ENCODE measurements at regions of chr2 and their contacts with region 1.

Region 1: DNA sequence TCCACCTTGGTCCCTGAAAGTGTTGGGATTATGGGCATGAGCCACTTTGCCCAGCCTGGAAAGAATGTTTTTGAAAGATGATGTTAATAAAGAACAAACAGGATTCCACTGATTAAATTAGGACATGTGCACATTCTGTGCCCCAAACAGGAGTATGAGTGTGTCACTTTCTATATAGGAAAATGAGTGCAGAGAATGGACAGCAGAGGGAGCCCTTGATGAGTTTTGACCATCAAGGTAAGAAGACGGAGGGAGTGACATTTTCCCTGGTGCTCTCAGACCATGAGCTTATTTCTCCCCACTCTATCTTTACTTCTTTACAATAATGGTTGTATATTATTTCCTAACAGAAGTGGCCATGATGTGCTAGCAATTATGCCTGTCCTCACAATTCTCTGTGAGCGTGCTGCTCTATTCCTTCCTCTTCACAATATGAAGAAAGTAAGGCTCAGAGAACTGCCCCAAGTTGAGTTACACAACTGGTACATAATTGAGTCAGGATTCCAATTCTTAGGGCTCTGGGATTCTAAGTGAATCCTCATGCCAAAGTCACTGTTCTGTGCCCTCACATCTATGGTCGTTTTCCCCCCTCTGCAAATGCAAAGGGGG is 20.6 kb downstream of the RPL37A start:
- DNase-seq: peak; percentile 65
- CTCF ChIP-seq: peak; percentile 60

Region 2: DNA sequence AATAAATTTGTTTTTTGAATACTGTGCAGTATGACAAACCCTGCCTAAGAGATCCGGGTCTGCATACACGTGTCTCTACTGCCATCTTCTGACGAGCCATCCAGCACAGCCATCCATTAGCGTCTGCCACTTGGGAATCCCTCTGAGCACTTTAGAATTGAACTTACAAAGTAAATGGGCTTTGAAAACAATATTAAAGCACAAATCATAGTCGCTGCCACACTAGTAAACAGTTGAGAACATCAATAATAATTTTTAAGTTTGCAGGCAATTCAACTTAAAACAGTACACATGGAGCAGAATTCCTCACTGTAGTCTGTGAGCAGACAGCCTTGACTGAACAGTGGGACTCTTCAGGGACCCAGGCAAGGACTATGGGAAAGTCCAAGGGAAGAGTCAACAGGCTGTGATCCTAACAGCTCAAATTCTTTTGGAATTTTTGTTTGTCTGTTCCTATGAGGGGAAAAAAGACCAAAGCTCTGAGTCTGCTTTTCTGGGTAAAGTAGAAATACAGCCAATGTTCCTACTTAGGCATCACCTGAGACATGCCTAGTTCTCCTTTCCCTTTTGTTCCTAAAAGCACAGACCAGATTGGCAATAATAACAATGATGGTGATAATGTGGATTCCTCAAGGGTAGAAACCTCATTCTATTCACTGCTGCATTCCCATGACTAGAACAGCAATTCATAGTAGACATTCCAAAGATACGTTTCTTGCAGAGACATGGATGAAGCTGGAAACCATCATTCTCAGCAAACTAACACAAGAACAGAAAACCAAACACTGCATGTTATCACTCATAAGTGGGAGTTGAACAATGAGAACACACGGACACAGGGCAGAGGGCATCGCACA is 598.8 kb before region 1 on chr2:
- CTCF ChIA-PET with region 1: no interaction called
- POLR2A ChIA-PET with region 1: no interaction called
- DNase-seq: peak; percentile 60
- CTCF ChIP-seq: peak; percentile 75

Region 3: DNA sequence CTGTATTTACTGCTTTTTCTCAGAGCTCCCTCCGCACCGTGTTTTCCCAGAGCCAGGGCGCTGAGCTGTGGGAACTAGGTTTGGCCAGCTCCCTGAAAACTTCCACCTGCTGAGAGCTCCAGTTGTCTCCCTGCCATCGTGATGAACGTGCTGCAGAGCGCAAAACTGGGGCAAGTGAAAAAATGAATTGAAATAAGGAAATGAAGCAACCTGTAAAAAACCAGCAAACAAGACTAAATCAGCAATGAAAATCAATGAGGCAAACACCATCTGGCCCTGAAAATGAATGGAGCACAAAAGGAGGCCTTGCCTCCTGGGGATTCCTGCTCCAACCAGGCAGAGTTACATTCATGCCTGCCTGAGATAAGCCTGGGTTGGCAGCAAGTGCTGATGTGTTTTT is 276.9 kb before region 1 on chr2:
- CTCF ChIA-PET with region 1: no interaction called
- POLR2A ChIA-PET with region 1: no interaction called
- DNase-seq: no peak
- CTCF ChIP-seq: no peak

Region 4: DNA sequence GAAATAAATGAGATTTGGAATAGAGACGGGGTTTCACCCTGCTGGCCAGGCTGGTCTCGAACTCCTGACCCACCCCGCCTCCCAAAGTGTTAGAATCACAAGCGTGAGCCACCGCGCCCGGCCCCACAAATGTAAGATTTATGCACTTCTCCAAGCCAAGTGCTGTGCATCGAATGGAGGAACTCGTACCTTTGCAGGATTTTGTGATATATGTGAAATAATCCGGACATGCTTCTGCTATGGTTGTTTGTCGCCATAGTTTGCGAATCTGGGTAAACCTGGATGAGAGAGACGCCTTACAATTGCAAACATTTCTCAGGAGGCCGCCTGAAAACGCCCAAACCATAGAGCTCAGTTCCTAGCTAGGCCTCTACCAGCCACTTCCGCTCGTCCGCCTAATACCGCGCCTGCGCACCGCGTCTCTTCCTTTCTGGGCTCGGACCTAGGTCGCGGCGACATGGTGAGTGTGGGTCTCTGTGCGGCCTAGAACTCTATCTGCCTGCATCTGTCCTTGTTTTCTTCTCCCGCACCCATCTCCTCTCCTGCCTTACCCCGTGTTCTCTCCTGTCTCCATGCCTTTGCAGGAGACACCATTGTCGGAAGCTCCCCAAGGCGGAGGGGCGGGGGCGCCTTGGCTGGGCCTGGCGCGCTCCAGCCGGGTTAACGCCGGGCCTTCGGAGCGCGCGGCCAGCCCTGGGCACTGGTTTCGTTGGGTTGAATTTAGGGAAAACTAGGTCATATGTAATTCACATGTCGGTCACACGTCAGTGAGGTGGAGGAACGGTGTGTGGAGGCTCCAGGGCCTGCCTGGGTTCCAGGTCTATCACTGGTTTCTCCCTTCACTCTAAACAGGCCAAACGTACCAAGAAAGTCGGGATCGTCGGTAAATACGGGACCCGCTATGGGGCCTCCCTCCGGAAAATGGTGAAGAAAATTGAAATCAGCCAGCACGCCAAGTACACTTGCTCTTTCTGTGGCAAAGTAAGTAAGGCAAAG is 20.5 kb before region 1 on chr2 and contains the start of gene RPL37A:
- CTCF ChIA-PET with region 1: interaction called, 17 read pairs
- POLR2A ChIA-PET with region 1: no interaction called
- DNase-seq: peak; percentile 93
- CTCF ChIP-seq: no peak

Region 5: GRCh38 chr2:216507220-216508160 is 11.8 kb before region 1 on chr2:
- CTCF ChIA-PET with region 1: interaction called, 27 read pairs
- POLR2A ChIA-PET with region 1: interaction called, 3 read pairs
- DNase-seq: no peak
- CTCF ChIP-seq: no peak

Region 6: DNA sequence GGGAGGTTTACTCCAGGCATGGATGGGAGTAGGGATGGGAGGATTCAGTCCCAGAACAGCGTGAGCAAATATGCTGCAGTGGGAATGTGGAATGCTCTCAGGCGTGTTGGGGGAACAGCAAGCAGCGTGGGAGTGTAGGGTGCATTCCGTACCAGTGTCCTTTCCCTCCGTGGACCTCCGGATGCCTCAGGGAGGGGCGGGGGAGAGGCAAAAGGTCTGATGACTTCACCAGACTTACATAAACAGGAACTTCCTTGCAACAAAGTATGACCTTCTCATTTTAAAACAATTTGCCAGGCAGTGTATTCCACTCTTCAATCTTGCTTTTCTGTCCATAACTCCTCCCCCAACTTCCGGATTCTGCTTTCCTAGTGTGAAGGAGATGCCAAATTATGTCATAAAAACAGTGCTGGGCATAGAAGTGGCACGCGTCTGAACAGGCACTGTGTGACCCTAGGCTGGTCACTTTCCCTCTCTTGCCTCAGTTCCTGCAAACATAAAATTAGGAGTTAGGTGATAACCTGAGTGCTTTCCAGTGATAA is 16.3 kb after region 1 on chr2:
- CTCF ChIA-PET with region 1: interaction called, 23 read pairs
- POLR2A ChIA-PET with region 1: no interaction called
- DNase-seq: no peak
- CTCF ChIP-seq: no peak

Region 7: DNA sequence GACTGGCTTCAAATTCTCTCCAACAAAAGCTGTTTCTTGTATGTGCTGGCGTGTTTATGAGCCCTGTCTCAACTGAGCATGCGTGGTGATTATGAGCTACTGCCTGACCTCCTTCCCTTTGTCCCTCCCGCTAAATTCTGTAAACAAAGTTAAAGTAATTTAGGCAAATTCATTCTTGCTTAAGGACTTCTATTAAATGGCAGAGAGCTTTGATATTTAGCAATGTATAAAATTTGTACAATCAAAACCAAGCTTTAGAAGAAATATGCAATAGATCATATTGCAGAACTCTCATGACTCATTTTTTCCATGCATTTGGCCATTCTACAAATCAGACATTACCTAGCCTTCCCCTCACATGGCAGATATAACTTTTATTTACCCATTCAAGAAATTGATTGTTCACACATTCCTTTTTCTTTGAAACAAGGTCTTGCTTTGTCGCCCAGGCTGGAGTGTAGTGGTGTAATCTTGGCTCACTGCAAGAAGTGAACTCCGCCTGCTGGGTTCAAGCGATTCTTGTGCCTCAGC is 132.2 kb after region 1 on chr2:
- CTCF ChIA-PET with region 1: interaction called, 12 read pairs
- POLR2A ChIA-PET with region 1: no interaction called
- DNase-seq: no peak
- CTCF ChIP-seq: no peak

Region 8: DNA sequence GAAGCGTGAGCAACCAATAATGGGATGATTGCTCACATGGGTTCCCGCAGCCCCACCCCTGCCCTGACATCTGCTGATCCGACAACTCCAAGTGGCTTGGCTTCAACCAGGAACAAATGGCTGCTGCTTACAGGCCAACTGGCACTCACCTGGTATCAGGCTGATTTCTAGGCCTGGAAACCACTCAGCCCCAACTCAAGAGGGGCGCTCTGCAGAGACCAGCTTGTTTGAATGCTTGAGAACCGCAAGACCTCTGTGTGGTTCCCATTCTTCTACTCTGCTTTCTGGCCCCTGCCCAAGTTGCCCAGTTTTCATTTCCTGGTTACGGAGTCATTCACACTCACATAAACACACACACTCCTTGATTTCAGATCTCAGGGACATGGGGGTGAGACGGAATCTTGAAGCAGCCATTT is 288.6 kb after region 1 on chr2:
- CTCF ChIA-PET with region 1: no interaction called
- POLR2A ChIA-PET with region 1: no interaction called
- DNase-seq: no peak
- CTCF ChIP-seq: no peak

Measured in GM10248 (cell line).